ENCODE measurements at regions of chr9 and their contacts with region 1.

Region 1: GRCh38 chr9:137295238-137295811 is 6.7 kb downstream of the NRARP start:
- DNase-seq: peak in 1 of 7 donors; percentile 35
- H3K4me3 ChIP-seq: peak overlapping the region in 1 of 4 donors; percentile 60
- H3K27ac ChIP-seq: peak overlapping the region in 1 of 5 donors; percentile 77
- H3K4me1 ChIP-seq: peaks cover 3 to 13% of the 10 kb centered on the region in 2 donors
- H3K27me3 ChIP-seq: peaks cover 26% of the 10 kb centered on the region
- CTCF ChIP-seq: peak in 3 of 6 experiments; percentile 62 to 85 (median 81)
- POLR2A ChIP-seq: no peak

Region 2: DNA sequence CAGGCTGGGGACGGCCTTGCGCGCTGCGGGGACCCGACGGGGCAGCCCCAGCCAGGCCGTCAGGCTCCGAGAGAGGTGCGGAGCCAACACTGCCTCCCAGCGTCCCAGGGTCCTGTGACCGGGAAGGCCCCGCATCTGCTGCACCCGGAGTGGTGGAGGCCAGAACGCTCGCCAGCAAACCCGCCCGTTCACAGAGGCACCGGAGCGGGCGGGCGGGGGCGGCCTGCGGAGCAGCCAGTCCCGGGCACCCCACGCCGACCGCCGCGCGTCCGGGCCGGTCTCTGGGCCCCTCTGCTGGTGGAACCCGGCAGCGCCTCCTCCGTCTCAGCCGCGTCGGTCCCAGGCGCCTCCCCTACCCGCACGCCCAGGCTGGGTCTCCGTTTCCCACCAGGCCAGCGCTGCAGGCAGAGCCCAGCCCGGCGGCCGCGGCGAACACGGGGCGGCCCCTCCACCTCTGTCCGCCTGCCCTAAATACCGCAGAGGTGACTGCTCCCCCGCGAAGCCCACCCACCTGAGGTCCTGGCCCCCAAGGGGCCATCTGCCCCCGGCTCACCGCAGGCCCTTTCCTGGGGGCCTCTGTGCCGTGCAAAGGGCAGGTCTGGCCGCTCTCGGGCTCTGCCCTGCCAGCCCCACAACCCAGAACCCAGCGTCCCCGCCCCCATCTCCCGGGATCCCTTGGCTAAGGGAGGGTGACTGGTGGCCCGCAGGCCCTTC is 111.7 kb after region 1 on chr9:
- intact Hi-C with region 1: loop called (anchors 2 to 5 kb)
- DNase-seq: peak; percentile 61 to 81 (median 74)
- H3K4me3 ChIP-seq: peak overlapping the region in 2 of 4 donors; percentile 10 to 54
- H3K27ac ChIP-seq: peak overlapping the region in 2 of 5 donors; percentile 17 to 26
- H3K4me1 ChIP-seq: peaks cover 24 to 25% of the 10 kb centered on the region in 2 donors
- H3K27me3 ChIP-seq: no peaks in the 10 kb centered on the region
- CTCF ChIP-seq: peak; percentile 44 to 94 (median 70)
- POLR2A ChIP-seq: no peak

Region 3: GRCh38 chr9:137521405-137521985 is 226.2 kb after region 1 on chr9:
- intact Hi-C with region 1: loop called in 1 of 2 experiments (anchors 10 kb)
- DNase-seq: no peak
- H3K4me3 ChIP-seq: no peak overlapping the region
- H3K27ac ChIP-seq: no peak overlapping the region
- H3K4me1 ChIP-seq: peaks cover 7 to 10% of the 10 kb centered on the region in 2 donors
- H3K27me3 ChIP-seq: no peaks in the 10 kb centered on the region
- CTCF ChIP-seq: no peak
- POLR2A ChIP-seq: no peak